ENCODE measurements at regions of chr14 and their contacts with region 1.

Region 1: GRCh38 chr14:95460647-95461478 is 55.6 kb downstream of the SYNE3 start:
- DNase-seq: no peak
- H3K4me3 ChIP-seq: no peak overlapping the region
- H3K4me3 Mint-ChIP-seq: no peak overlapping the region
- H3K27ac ChIP-seq: peak overlapping the region; percentile 53
- H3K27ac Mint-ChIP-seq: peak overlapping the region; percentile 96 to 98 (median 97)
- H3K4me1 ChIP-seq: peaks cover 66% of the 10 kb centered on the region
- H3K4me1 Mint-ChIP-seq: peaks cover 42 to 71% (median 59%) of the 10 kb centered on the region in 4 donors
- H3K27me3 ChIP-seq: no peaks in the 10 kb centered on the region
- H3K27me3 Mint-ChIP-seq: no peaks in the 10 kb centered on the region

Region 2: GRCh38 chr14:95287176-95287754 is 173.6 kb before region 1 on chr14:
- CTCF ChIA-PET with region 1: no interaction called
- POLR2A ChIA-PET with region 1: no interaction called
- intact Hi-C with region 1: no loop called
- DNase-seq: no peak
- H3K4me3 ChIP-seq: no peak overlapping the region
- H3K4me3 Mint-ChIP-seq: no peak overlapping the region
- H3K27ac ChIP-seq: no peak overlapping the region
- H3K27ac Mint-ChIP-seq: no peak overlapping the region
- H3K4me1 ChIP-seq: no peaks in the 10 kb centered on the region
- H3K4me1 Mint-ChIP-seq: peaks cover 0 to 1% (median under 1%) of the 10 kb centered on the region in 4 donors
- H3K27me3 ChIP-seq: no peaks in the 10 kb centered on the region
- H3K27me3 Mint-ChIP-seq: peaks cover 7 to 21% of the 10 kb centered on the region in 2 donors

Region 3: GRCh38 chr14:95480109-95480886 is 19.4 kb after region 1 on chr14:
- CTCF ChIA-PET with region 1: interaction called, 4 read pairs
- POLR2A ChIA-PET with region 1: interaction called, 8 read pairs
- intact Hi-C with region 1: loop called (anchors 2 kb)
- DNase-seq: peak; percentile 49 to 85 (median 57)
- H3K4me3 ChIP-seq: no peak overlapping the region
- H3K4me3 Mint-ChIP-seq: peak overlapping the region in 7 of 8 donors; percentile 28 to 74 (median 68)
- H3K27ac ChIP-seq: peak overlapping the region; percentile 61
- H3K27ac Mint-ChIP-seq: peak overlapping the region; percentile 88 to 98 (median 95)
- H3K4me1 ChIP-seq: peaks cover 51% of the 10 kb centered on the region
- H3K4me1 Mint-ChIP-seq: peaks cover 32 to 72% (median 53%) of the 10 kb centered on the region in 4 donors
- H3K27me3 ChIP-seq: no peaks in the 10 kb centered on the region
- H3K27me3 Mint-ChIP-seq: no peaks in the 10 kb centered on the region

Region 4: GRCh38 chr14:95495538-95496025 is 34.7 kb after region 1 on chr14:
- CTCF ChIA-PET with region 1: interaction called, 7 read pairs
- POLR2A ChIA-PET with region 1: interaction called, 14 read pairs
- intact Hi-C with region 1: no loop called
- DNase-seq: peak in 2 of 5 donors; percentile 18 to 52
- H3K4me3 ChIP-seq: no peak overlapping the region
- H3K4me3 Mint-ChIP-seq: peak overlapping the region in 7 of 8 donors; percentile 39 to 73 (median 69)
- H3K27ac ChIP-seq: peak overlapping the region; percentile 50
- H3K27ac Mint-ChIP-seq: peak overlapping the region; percentile 84 to 96 (median 87)
- H3K4me1 ChIP-seq: peaks cover 61% of the 10 kb centered on the region
- H3K4me1 Mint-ChIP-seq: peaks cover 37 to 79% (median 64%) of the 10 kb centered on the region in 4 donors
- H3K27me3 ChIP-seq: no peaks in the 10 kb centered on the region
- H3K27me3 Mint-ChIP-seq: no peaks in the 10 kb centered on the region

Region 5: GRCh38 chr14:95504135-95505029 is 43.5 kb after region 1 on chr14:
- CTCF ChIA-PET with region 1: interaction called, 5 read pairs
- POLR2A ChIA-PET with region 1: interaction called, 12 read pairs
- intact Hi-C with region 1: no loop called
- DNase-seq: no peak
- H3K4me3 ChIP-seq: no peak overlapping the region
- H3K4me3 Mint-ChIP-seq: peak overlapping the region in 4 of 8 donors; percentile 8 to 66 (median 49)
- H3K27ac ChIP-seq: no peak overlapping the region
- H3K27ac Mint-ChIP-seq: peak overlapping the region; percentile 48 to 92 (median 76)
- H3K4me1 ChIP-seq: peaks cover 75% of the 10 kb centered on the region
- H3K4me1 Mint-ChIP-seq: peaks cover 58 to 91% (median 76%) of the 10 kb centered on the region in 4 donors
- H3K27me3 ChIP-seq: no peaks in the 10 kb centered on the region
- H3K27me3 Mint-ChIP-seq: no peaks in the 10 kb centered on the region

Region 6: GRCh38 chr14:95534299-95535225 is 73.7 kb after region 1 on chr14 and contains the start of gene GLRX5:
- CTCF ChIA-PET with region 1: interaction called, 845 read pairs
- POLR2A ChIA-PET with region 1: interaction called, 185 read pairs
- intact Hi-C with region 1: loop called (anchors 1 kb)
- DNase-seq: peak; percentile 99 to 100 (median 99)
- H3K4me3 ChIP-seq: peak within 1 kb of the TSS; percentile 48 to 76
- H3K4me3 Mint-ChIP-seq: peak within 1 kb of the TSS; percentile 90 to 97 (median 96)
- H3K27ac ChIP-seq: peak within 1 kb of the TSS; percentile 77
- H3K27ac Mint-ChIP-seq: peak within 1 kb of the TSS; percentile 91 to 99 (median 95)
- H3K4me1 ChIP-seq: peaks cover 50% of the 10 kb centered on the region
- H3K4me1 Mint-ChIP-seq: peaks cover 52 to 87% (median 67%) of the 10 kb centered on the region in 4 donors
- H3K27me3 ChIP-seq: no peaks in the 10 kb centered on the region
- H3K27me3 Mint-ChIP-seq: no peaks in the 10 kb centered on the region
- total RNA-seq, gene GLRX5: 17.6 to 18.7 TPM

Region 7: DNA sequence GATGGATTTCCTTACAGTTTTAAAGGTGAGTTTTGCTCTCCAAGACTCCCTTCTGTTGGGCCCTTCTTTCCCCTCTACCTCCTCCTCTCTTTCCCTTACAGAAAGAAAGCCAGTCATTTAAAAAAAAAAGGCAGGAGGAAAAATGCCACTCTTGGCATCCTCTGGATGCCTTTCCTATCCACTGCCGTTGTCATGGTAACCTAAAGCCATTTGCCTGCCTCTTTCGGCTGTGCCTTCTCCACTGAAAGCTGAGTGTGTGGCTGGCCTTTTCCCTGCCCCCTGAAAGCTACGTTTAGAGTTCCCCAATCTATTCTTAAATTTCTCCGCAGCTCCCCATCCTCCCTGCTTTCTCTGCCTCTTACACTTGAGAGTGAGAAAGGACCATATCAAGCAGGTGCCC is 482.8 kb after region 1 on chr14:
- CTCF ChIA-PET with region 1: no interaction called
- POLR2A ChIA-PET with region 1: no interaction called
- intact Hi-C with region 1: no loop called
- DNase-seq: no peak
- H3K4me3 ChIP-seq: no peak overlapping the region
- H3K4me3 Mint-ChIP-seq: no peak overlapping the region
- H3K27ac ChIP-seq: no peak overlapping the region
- H3K27ac Mint-ChIP-seq: no peak overlapping the region
- H3K4me1 ChIP-seq: no peaks in the 10 kb centered on the region
- H3K4me1 Mint-ChIP-seq: no peaks in the 10 kb centered on the region
- H3K27me3 ChIP-seq: no peaks in the 10 kb centered on the region
- H3K27me3 Mint-ChIP-seq: peaks cover 10 to 13% of the 10 kb centered on the region in 2 donors